Esophagus squamous epithelium (tissue), 5 donors: ENCODE measurements at regions of chr1 and their contacts with region 1.

Region 1: DNA sequence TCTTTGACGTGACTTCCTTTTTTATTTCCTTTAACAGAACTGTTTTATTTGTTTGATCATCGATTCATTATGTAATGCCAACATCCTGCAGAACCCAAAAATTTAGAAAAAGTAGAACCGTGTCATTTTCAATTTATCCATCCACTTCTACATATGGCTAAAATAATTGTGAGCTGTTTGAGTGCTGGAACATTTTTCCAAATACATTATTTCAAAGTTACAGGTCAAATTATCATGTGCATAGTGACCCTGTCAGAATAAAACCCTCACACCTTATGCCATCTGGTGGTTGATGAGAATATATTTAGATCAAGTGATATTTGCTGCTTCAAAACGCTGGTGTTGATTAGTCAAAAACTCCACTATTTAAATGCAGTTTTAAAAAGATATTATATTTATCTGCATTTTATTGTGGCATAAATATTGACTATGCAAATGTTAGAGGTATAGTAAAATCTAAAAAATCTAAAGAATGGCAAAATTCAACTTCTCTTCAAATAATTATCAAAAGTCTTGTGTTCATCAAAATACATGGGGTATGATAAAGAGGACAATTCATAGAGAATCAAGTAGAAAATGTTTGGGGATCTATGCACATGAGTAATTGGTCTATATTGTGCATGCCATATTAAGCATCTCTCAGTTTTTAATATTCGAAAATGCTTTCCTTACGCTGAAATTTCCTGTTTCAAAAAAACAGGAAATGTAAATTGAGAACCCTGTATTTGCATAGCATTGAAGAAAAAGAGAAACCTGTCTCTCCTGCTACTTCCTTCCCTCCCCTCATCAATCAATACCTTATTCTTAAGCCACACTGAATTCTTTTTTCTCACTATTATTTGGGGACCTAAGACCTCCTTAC is 39.7 kb downstream of the UBE2U start:
- DNase-seq: no peak
- H3K4me3 ChIP-seq: no peak overlapping the region
- H3K27ac ChIP-seq: no peak overlapping the region
- H3K4me1 ChIP-seq: peaks cover 0 to 8% (median 0%) of the 10 kb centered on the region in 3 donors
- H3K27me3 ChIP-seq: peaks cover 0 to 5% (median 0%) of the 10 kb centered on the region in 4 donors
- CTCF ChIP-seq: peak; percentile 17 to 71 (median 49)
- POLR2A ChIP-seq: no peak

Region 2: DNA sequence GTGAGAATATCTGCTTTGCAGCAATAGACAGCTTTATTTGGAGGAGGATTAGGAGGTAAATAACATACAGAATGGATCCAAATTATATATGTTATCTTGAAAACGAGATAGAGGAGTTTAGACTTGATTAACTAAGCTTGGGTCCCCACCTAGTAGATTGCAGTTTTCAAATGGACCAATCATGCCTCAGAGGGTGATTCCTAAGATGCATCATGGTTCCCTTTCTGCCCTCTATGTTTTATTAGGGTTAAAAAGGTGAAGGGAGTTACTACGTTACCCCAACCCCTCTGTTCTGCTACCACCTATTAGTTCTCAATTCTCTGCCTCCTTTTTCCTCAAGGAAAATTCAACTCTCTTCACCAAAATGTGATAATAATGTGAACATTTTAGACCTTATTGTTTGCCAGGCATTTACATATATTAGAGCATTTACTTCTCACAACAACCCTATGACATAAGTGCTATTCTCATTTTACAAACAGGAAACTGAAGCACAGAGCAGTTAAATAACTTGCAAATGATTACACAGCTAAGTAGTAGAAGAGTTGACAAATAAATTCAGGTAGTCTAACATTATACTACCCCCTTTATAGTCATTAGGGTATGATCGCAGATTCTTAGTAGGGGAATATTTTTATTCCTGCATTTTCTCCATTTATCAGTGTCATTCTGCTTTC is 673.3 kb before region 1 on chr1:
- intact Hi-C with region 1: loop called (anchors 5 kb)
- DNase-seq: no peak
- H3K4me3 ChIP-seq: no peak overlapping the region
- H3K27ac ChIP-seq: no peak overlapping the region
- H3K4me1 ChIP-seq: no peaks in the 10 kb centered on the region
- H3K27me3 ChIP-seq: no peaks in the 10 kb centered on the region
- CTCF ChIP-seq: no peak
- POLR2A ChIP-seq: no peak

Region 3: DNA sequence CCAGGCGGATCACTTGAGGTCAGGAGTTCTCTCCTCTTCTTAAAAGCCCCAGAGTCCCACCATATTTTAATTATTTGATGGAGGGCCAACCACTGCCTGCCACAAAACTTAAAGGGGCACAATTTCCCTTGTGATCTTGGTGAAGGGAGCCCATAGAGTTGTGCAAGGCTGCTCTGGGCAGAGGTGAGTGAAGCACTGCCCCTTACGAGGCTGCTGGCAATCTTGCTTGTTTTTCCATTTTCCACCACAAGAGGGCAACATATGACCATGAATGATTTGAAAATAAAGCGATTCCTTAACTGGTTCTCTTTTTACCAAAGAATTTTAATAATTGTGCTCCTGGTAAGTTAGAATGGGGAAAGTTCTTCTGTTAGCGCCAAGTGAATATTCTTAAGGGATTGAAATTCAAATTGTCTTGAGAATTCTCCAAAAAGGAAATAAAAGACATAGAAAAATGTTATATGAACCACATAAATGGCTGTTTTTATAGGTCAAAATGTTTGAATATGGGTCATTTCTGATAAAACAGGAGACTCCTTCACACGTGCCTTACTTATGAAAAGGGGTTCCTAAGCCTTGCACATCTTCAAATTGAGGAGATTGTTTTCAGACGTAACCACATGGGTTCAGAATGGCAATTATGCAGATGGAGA is 627.2 kb before region 1 on chr1:
- intact Hi-C with region 1: loop called (anchors 5 kb)
- DNase-seq: no peak
- H3K4me3 ChIP-seq: no peak overlapping the region
- H3K27ac ChIP-seq: no peak overlapping the region
- H3K4me1 ChIP-seq: peaks cover 0 to 17% (median 11%) of the 10 kb centered on the region in 3 donors
- H3K27me3 ChIP-seq: no peaks in the 10 kb centered on the region
- CTCF ChIP-seq: peak; percentile 82 to 88 (median 84)
- POLR2A ChIP-seq: no peak

Region 4: DNA sequence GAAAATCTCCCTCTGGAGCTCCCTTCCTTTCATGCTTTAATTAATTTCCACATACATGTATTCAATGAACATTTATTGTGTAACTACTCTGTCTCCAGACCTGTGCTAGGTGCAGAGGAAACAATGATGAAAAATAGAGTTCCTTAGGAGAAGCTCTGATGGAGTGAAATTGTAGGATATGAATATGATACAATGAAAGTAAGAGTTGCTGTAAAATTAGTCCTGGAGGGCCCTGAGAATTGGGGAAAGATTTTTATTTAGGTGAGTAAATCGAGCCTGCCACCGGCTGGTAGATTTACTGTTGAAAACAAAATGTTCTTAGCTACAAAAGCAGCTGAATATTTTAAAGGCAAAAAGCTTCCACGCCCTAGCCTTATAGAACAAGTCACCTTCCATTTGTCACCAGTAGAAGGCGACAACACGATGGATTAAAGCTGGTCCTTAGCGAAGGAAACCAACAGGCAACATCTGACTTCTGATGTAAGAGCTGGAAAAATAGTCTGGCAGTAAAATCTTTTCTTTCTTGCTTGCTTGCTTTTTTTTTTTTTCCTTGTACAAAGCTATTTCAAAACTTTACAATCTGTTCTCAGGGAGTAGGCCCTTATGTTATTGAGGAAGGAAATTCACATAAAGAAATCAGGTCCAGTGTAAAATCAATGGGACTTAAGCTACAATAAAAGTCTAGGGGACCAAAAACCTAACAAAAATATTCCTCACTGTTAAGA is 551.3 kb before region 1 on chr1:
- intact Hi-C with region 1: loop called (anchors 10 kb)
- DNase-seq: no peak
- H3K4me3 ChIP-seq: no peak overlapping the region
- H3K27ac ChIP-seq: peak overlapping the region in 3 of 4 donors; percentile 1 to 77 (median 73)
- H3K4me1 ChIP-seq: peaks cover 0 to 39% (median 9%) of the 10 kb centered on the region in 3 donors
- H3K27me3 ChIP-seq: no peaks in the 10 kb centered on the region
- CTCF ChIP-seq: peak; percentile 40 to 83 (median 74)
- POLR2A ChIP-seq: no peak